ENCODE measurements at regions of chr16 and their contacts with region 1.

Region 1: GRCh38 chr16:47460711-47461597 is at the starts of genes ITFG1 and PHKB:
- DNase-seq: peak; percentile 97
- ATAC-seq: peak; percentile 95
- H3K4me3 Mint-ChIP-seq: peak within 1 kb of the TSS; percentile 97
- H3K27ac Mint-ChIP-seq: peak within 1 kb of the TSS; percentile 97
- H3K4me1 Mint-ChIP-seq: peaks cover 58% of the 10 kb centered on the region
- H3K27me3 Mint-ChIP-seq: no peaks in the 10 kb centered on the region
- total RNA-seq, gene ITFG1: 18.9 to 27.0 TPM
- total RNA-seq, gene PHKB: 12.6 to 12.8 TPM

Region 2: GRCh38 chr16:46830902-46831647 is 629.9 kb before region 1 on chr16 and contains the start of gene C16orf87:
- CTCF ChIA-PET with region 1: no interaction called
- POLR2A ChIA-PET with region 1: no interaction called
- intact Hi-C with region 1: loop called in 1 of 2 experiments (anchors 1 kb)
- DNase-seq: peak; percentile 95
- ATAC-seq: peak; percentile 96
- H3K4me3 Mint-ChIP-seq: peak within 1 kb of the TSS; percentile 93
- H3K27ac Mint-ChIP-seq: peak within 1 kb of the TSS; percentile 98
- H3K4me1 Mint-ChIP-seq: peaks cover 36% of the 10 kb centered on the region
- H3K27me3 Mint-ChIP-seq: no peaks in the 10 kb centered on the region
- total RNA-seq, gene C16orf87: 14.6 to 17.2 TPM

Region 3: DNA sequence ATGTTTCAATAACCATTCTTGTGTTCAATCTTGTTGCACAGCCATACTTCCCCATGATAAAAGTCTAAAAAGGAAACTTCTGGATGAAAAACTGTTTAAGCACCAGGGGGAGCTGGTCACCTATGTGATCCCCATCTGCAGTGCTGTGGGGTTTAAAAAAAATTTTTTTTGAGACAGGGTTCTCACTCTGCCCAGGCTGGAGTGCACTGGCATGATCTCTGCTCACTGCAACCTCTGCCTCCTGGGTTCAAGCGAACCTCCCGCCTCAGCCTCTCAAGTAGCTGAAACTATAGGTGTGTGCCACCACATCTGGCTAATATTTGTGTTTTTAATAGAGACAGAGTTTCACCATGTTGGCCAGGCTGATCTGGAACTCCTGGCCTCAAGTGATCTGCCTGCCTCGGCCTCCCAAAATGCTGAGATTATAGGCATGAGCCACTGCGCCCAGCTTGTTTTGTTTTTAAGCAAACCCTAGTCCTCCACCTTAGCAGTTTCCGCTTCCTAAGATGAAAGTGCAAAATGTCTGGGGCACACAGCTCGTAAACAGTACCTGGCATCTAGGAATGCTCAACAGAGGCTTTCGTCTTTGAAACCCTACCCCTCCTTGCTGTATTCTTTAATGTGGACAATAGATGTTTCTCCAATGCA is 512.9 kb before region 1 on chr16:
- CTCF ChIA-PET with region 1: no interaction called
- POLR2A ChIA-PET with region 1: no interaction called
- intact Hi-C with region 1: loop called in 1 of 2 experiments (anchors 5 kb)
- DNase-seq: peak; percentile 56
- ATAC-seq: peak; percentile 64
- H3K4me3 Mint-ChIP-seq: no peak overlapping the region
- H3K27ac Mint-ChIP-seq: peak overlapping the region; percentile 70
- H3K4me1 Mint-ChIP-seq: peaks cover 22% of the 10 kb centered on the region
- H3K27me3 Mint-ChIP-seq: no peaks in the 10 kb centered on the region

Region 4: GRCh38 chr16:47574091-47575054 is 113.4 kb after region 1 on chr16:
- CTCF ChIA-PET with region 1: no interaction called
- POLR2A ChIA-PET with region 1: interaction called, 3 read pairs
- intact Hi-C with region 1: loop called in 1 of 2 experiments (anchors 1 kb)
- DNase-seq: peak; percentile 66
- ATAC-seq: peak; percentile 87
- H3K4me3 Mint-ChIP-seq: no peak overlapping the region
- H3K27ac Mint-ChIP-seq: peak overlapping the region; percentile 78
- H3K4me1 Mint-ChIP-seq: peaks cover 46% of the 10 kb centered on the region
- H3K27me3 Mint-ChIP-seq: no peaks in the 10 kb centered on the region

Region 5: GRCh38 chr16:48244080-48244862 is 783.3 kb after region 1 on chr16 and contains the start of gene LONP2:
- CTCF ChIA-PET with region 1: no interaction called
- POLR2A ChIA-PET with region 1: no interaction called
- intact Hi-C with region 1: loop called (anchors 1 to 10 kb)
- DNase-seq: peak; percentile 95
- ATAC-seq: peak; percentile 94
- H3K4me3 Mint-ChIP-seq: peak within 1 kb of the TSS; percentile 91
- H3K27ac Mint-ChIP-seq: peak within 1 kb of the TSS; percentile 88
- H3K4me1 Mint-ChIP-seq: peaks cover 36% of the 10 kb centered on the region
- H3K27me3 Mint-ChIP-seq: no peaks in the 10 kb centered on the region
- total RNA-seq, gene LONP2: 60.3 to 63.2 TPM

Region 6: DNA sequence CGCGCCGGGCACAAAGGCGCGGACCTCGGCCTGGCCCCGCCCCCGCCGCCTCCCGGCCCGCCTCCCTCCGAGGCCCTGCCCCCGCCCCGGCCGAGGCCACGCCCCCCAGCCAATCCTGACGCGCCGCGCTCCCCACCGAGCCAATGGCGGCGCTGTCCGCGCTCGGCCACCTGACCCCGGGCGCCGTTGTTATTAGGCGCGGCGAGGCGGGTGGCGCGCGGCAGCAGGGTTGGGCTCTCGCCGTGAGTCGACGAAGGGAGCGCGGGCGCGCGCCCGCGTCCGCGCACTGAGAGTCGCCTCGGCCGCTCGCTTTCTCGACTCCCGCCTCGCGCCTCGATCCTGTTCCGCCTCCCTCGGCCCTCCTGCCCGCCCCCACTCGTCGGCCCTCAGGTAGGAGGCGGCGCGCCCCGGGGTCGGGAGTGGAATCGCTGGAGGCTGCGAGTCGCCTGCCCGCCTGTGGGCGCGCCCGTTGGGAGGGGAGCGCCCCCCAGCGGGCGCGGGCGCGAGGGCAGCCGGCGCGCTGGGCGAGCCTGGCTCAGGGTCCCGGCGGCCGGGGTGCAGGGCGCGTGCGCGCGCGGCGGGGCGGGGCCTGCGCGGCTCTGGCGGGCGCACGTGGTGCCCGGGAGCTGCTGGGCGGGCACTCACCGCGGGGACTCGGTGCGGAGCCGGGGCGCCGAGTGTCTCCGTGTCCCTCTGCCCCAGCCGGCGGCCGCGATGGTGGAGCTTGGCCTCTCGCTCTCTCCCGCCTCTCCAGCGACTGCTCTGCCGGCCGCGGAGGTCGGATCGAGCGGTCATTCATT is 1821.1 kb after region 1 on chr16:
- CTCF ChIA-PET with region 1: no interaction called
- POLR2A ChIA-PET with region 1: no interaction called
- intact Hi-C with region 1: loop called in 1 of 2 experiments (anchors 5 kb)
- DNase-seq: peak; percentile 92
- ATAC-seq: peak; percentile 94
- H3K4me3 Mint-ChIP-seq: peak overlapping the region; percentile 56
- H3K27ac Mint-ChIP-seq: no peak overlapping the region
- H3K4me1 Mint-ChIP-seq: peaks cover 11% of the 10 kb centered on the region
- H3K27me3 Mint-ChIP-seq: peaks cover 61% of the 10 kb centered on the region